Activated CD4-positive, alpha-beta T cell treated with anti-CD3 and anti-CD28 coated beads, Interleukin-2, amount 10 ng/mL, durations not matched to agents 24 days and 14 days (primary cell): ENCODE measurements at regions of chr5 and their contacts with region 1.

Region 1: DNA sequence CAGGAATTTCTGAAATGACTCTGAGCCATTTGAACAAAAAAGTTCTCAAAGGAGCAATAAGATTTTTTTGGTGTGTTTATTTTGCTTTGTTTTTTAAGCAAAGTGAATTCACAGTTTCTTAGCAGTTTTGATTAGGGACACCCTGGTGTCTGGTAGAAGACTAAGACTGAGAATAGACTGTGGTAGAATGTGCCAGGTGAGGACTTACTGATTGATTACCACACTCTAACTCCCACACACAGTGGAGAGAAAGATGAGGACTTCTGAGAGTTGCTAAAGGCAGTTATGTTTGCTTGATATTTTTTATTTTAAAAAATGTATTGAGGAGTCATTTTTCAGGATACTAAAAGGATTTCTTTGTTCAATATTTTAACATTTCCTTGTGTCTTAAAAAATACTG is 175.1 kb downstream of the CD180 start:
- DNase-seq: no peak
- H3K4me3 Mint-ChIP-seq: no peak overlapping the region
- H3K27ac Mint-ChIP-seq: no peak overlapping the region
- H3K4me1 Mint-ChIP-seq: peaks cover 11% of the 10 kb centered on the region
- H3K27me3 Mint-ChIP-seq: no peaks in the 10 kb centered on the region

Region 2: GRCh38 chr5:67032921-67033664 is 11.6 kb after region 1 on chr5:
- intact Hi-C with region 1: loop called (anchors 1 kb)
- DNase-seq: no peak
- H3K4me3 Mint-ChIP-seq: no peak overlapping the region
- H3K27ac Mint-ChIP-seq: no peak overlapping the region
- H3K4me1 Mint-ChIP-seq: peaks cover 64% of the 10 kb centered on the region
- H3K27me3 Mint-ChIP-seq: no peaks in the 10 kb centered on the region

Region 3: GRCh38 chr5:67395790-67396418 is 374.4 kb after region 1 on chr5:
- intact Hi-C with region 1: no loop called
- DNase-seq: no peak
- H3K4me3 Mint-ChIP-seq: no peak overlapping the region
- H3K27ac Mint-ChIP-seq: no peak overlapping the region
- H3K4me1 Mint-ChIP-seq: no peaks in the 10 kb centered on the region
- H3K27me3 Mint-ChIP-seq: peaks cover 9% of the 10 kb centered on the region